ENCODE measurements at regions of chr7 and their contacts with region 1.

Region 1: DNA sequence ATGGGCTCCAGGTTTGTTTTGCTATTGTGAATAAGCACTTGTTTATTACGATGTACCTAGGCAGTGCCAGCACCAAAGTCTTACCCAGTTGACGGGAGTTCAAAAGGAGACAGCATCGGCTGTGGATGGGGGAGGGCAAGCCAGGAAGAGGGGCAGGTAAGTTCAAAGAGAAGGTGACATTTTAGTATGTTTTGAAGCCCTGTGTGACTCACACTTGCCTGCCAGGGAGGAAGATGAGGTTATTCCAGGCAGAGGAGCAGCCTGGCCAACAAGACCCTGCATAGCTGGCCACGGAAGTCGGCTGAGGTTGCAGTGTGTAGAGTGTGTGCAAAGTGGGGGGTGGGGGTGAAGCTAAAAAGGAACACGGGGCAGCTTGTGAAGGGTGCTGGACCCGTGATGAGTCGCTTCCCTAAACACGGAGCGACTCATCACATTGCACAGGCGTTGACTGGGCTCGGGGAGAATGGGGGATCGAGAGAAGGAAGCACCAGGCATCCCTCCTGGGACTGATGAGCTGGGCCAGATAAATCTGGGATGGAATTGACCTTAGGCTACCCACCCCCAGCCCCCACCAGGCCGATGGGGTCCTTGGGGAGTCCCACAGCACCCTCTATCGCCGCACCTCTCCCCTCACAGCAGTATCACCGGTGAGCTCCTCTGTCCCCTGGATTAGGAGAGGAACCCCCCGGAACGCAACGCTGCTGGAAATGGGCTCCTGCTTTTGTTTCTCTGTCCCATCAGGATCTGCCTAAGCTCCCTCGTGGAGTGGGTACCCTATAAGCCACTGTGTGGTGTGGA is 97.9 kb upstream of the IKZF1 start:
- DNase-seq: peak; percentile 35 to 80 (median 63)
- ATAC-seq: peak; percentile 75 to 85 (median 80)
- H3K4me3 ChIP-seq: no peak overlapping the region
- H3K4me3 Mint-ChIP-seq: peak overlapping the region; percentile 45 to 84 (median 62)
- H3K27ac ChIP-seq: peak overlapping the region; percentile 68
- H3K27ac Mint-ChIP-seq: peak overlapping the region; percentile 88 to 95
- H3K4me1 ChIP-seq: peaks cover 55 to 66% of the 10 kb centered on the region in 2 experiments
- H3K4me1 Mint-ChIP-seq: peaks cover 76 to 84% (median 83%) of the 10 kb centered on the region in 3 donors
- H3K27me3 ChIP-seq: no peaks in the 10 kb centered on the region
- H3K27me3 Mint-ChIP-seq: no peaks in the 10 kb centered on the region

Region 2: GRCh38 chr7:49060743-49061142 is 1145.9 kb before region 1 on chr7:
- CTCF ChIA-PET with region 1: no interaction called
- POLR2A ChIA-PET with region 1: no interaction called
- DNase-seq: no peak
- ATAC-seq: no peak
- H3K4me3 ChIP-seq: no peak overlapping the region
- H3K4me3 Mint-ChIP-seq: no peak overlapping the region
- H3K27ac ChIP-seq: no peak overlapping the region
- H3K27ac Mint-ChIP-seq: no peak overlapping the region
- H3K4me1 ChIP-seq: no peaks in the 10 kb centered on the region
- H3K4me1 Mint-ChIP-seq: no peaks in the 10 kb centered on the region
- H3K27me3 ChIP-seq: no peaks in the 10 kb centered on the region
- H3K27me3 Mint-ChIP-seq: no peaks in the 10 kb centered on the region

Region 3: GRCh38 chr7:49995681-49996080 is 211.0 kb before region 1 on chr7:
- CTCF ChIA-PET with region 1: no interaction called
- POLR2A ChIA-PET with region 1: no interaction called
- DNase-seq: no peak
- ATAC-seq: no peak
- H3K4me3 ChIP-seq: no peak overlapping the region
- H3K4me3 Mint-ChIP-seq: no peak overlapping the region
- H3K27ac ChIP-seq: no peak overlapping the region
- H3K27ac Mint-ChIP-seq: no peak overlapping the region
- H3K4me1 ChIP-seq: no peaks in the 10 kb centered on the region
- H3K4me1 Mint-ChIP-seq: no peaks in the 10 kb centered on the region
- H3K27me3 ChIP-seq: no peaks in the 10 kb centered on the region
- H3K27me3 Mint-ChIP-seq: peaks cover 3 to 4% of the 10 kb centered on the region in 2 donors

Region 4: GRCh38 chr7:50142425-50143017 is 64.1 kb before region 1 on chr7:
- CTCF ChIA-PET with region 1: interaction called, 3 to 18 read pairs
- POLR2A ChIA-PET with region 1: no interaction called
- DNase-seq: peak in 13 of 35 experiments; percentile 14 to 81 (median 30)
- ATAC-seq: peak in 3 of 4 experiments; percentile 46 to 81 (median 74)
- H3K4me3 ChIP-seq: no peak overlapping the region
- H3K4me3 Mint-ChIP-seq: peak overlapping the region; percentile 39 to 57 (median 57)
- H3K27ac ChIP-seq: peak overlapping the region; percentile 7
- H3K27ac Mint-ChIP-seq: peak overlapping the region; percentile 80 to 84
- H3K4me1 ChIP-seq: peaks cover 3 to 24% of the 10 kb centered on the region in 2 experiments
- H3K4me1 Mint-ChIP-seq: peaks cover 21 to 32% (median 26%) of the 10 kb centered on the region in 3 donors
- H3K27me3 ChIP-seq: no peaks in the 10 kb centered on the region
- H3K27me3 Mint-ChIP-seq: no peaks in the 10 kb centered on the region

Region 5: GRCh38 chr7:50281680-50282445 is 75.2 kb after region 1 on chr7:
- CTCF ChIA-PET with region 1: no interaction called
- POLR2A ChIA-PET with region 1: no interaction called
- DNase-seq: peak in 1 of 35 experiments; percentile 42
- ATAC-seq: peak; percentile 66 to 91 (median 82)
- H3K4me3 ChIP-seq: peak overlapping the region in 1 of 2 donors; percentile 52
- H3K4me3 Mint-ChIP-seq: peak overlapping the region; percentile 53 to 74 (median 58)
- H3K27ac ChIP-seq: peak overlapping the region; percentile 56
- H3K27ac Mint-ChIP-seq: peak overlapping the region; percentile 88 to 97
- H3K4me1 ChIP-seq: peaks cover 20 to 43% of the 10 kb centered on the region in 2 experiments
- H3K4me1 Mint-ChIP-seq: peaks cover 53 to 60% (median 54%) of the 10 kb centered on the region in 3 donors
- H3K27me3 ChIP-seq: no peaks in the 10 kb centered on the region
- H3K27me3 Mint-ChIP-seq: no peaks in the 10 kb centered on the region

Region 6: DNA sequence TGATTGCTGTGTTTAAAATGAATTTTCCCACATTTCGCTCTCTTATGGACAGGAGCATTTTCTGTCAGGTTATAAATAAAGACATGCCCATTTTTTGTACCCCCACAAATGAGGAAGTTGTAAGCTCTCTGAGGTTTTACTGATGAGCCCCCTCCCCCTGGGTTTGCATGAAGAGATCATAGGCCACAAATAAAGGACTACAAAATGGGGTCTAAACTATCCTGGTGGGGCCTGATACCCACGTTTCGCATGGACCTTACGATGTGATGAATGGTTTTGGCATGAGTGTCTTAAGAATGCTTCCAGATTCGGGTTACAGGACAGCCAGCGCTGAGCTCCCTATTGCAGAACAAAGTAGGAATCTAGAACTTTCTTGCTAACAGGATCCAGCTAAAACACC is 103.7 kb after region 1 on chr7:
- CTCF ChIA-PET with region 1: interaction called, 16 to 22 read pairs
- POLR2A ChIA-PET with region 1: interaction called, 3 to 9 read pairs
- DNase-seq: no peak
- ATAC-seq: no peak
- H3K4me3 ChIP-seq: peak overlapping the region; percentile 67 to 68
- H3K4me3 Mint-ChIP-seq: peak overlapping the region; percentile 95 to 99 (median 98)
- H3K27ac ChIP-seq: peak overlapping the region; percentile 87
- H3K27ac Mint-ChIP-seq: peak overlapping the region in 1 of 2 donors; percentile 100
- H3K4me1 ChIP-seq: peaks cover 44 to 52% of the 10 kb centered on the region in 2 experiments
- H3K4me1 Mint-ChIP-seq: peaks cover 72 to 89% (median 77%) of the 10 kb centered on the region in 3 donors
- H3K27me3 ChIP-seq: no peaks in the 10 kb centered on the region
- H3K27me3 Mint-ChIP-seq: no peaks in the 10 kb centered on the region

Region 7: GRCh38 chr7:50335795-50336754 is 129.4 kb after region 1 on chr7:
- CTCF ChIA-PET with region 1: interaction called, 6 to 13 read pairs
- POLR2A ChIA-PET with region 1: interaction called in 1 of 2 experiments, 3 read pairs
- DNase-seq: peak in 34 of 35 experiments; percentile 60 to 84 (median 73)
- ATAC-seq: peak; percentile 28 to 63 (median 58)
- H3K4me3 ChIP-seq: peak overlapping the region; percentile 16 to 45
- H3K4me3 Mint-ChIP-seq: no peak overlapping the region
- H3K27ac ChIP-seq: peak overlapping the region; percentile 88
- H3K27ac Mint-ChIP-seq: no peak overlapping the region
- H3K4me1 ChIP-seq: peaks cover 90 to 97% of the 10 kb centered on the region in 2 experiments
- H3K4me1 Mint-ChIP-seq: peaks cover 0 to 45% (median 0%) of the 10 kb centered on the region in 3 donors
- H3K27me3 ChIP-seq: no peaks in the 10 kb centered on the region
- H3K27me3 Mint-ChIP-seq: no peaks in the 10 kb centered on the region

Region 8: GRCh38 chr7:50359995-50360925 is 153.6 kb after region 1 on chr7:
- CTCF ChIA-PET with region 1: interaction called, 5 to 103 read pairs
- POLR2A ChIA-PET with region 1: no interaction called
- DNase-seq: peak; percentile 57 to 95 (median 83)
- ATAC-seq: peak; percentile 85 to 92 (median 87)
- H3K4me3 ChIP-seq: peak overlapping the region in 1 of 2 donors; percentile 10
- H3K4me3 Mint-ChIP-seq: peak overlapping the region; percentile 63 to 73 (median 71)
- H3K27ac ChIP-seq: peak overlapping the region; percentile 96
- H3K27ac Mint-ChIP-seq: peak overlapping the region; percentile 99
- H3K4me1 ChIP-seq: peaks cover 92 to 95% of the 10 kb centered on the region in 2 experiments
- H3K4me1 Mint-ChIP-seq: peaks cover 98 to 99% (median 98%) of the 10 kb centered on the region in 3 donors
- H3K27me3 ChIP-seq: no peaks in the 10 kb centered on the region
- H3K27me3 Mint-ChIP-seq: no peaks in the 10 kb centered on the region

Region 9: GRCh38 chr7:50376056-50376823 is 169.6 kb after region 1 on chr7:
- CTCF ChIA-PET with region 1: interaction called, 16 to 27 read pairs
- POLR2A ChIA-PET with region 1: no interaction called
- DNase-seq: no peak
- ATAC-seq: no peak
- H3K4me3 ChIP-seq: no peak overlapping the region
- H3K4me3 Mint-ChIP-seq: peak overlapping the region in 1 of 3 donors; percentile 50
- H3K27ac ChIP-seq: peak overlapping the region; percentile 10
- H3K27ac Mint-ChIP-seq: peak overlapping the region; percentile 71 to 86
- H3K4me1 ChIP-seq: peaks cover 48 to 74% of the 10 kb centered on the region in 2 experiments
- H3K4me1 Mint-ChIP-seq: peaks cover 97 to 99% (median 98%) of the 10 kb centered on the region in 3 donors
- H3K27me3 ChIP-seq: no peaks in the 10 kb centered on the region
- H3K27me3 Mint-ChIP-seq: no peaks in the 10 kb centered on the region